Testis (tissue), 5 donors: ENCODE measurements at regions of chr6 and their contacts with region 1.

Region 1: GRCh38 chr6:43454696-43455530 is 435 bp downstream of the DLK2 start:
- DNase-seq: peak; percentile 89
- H3K4me3 ChIP-seq: peak overlapping the region; percentile 13 to 50
- H3K27ac ChIP-seq: no peak overlapping the region
- H3K4me1 ChIP-seq: no peaks in the 10 kb centered on the region
- H3K27me3 ChIP-seq: no peaks in the 10 kb centered on the region
- CTCF ChIP-seq: no peak
- POLR2A ChIP-seq: no peak

Region 2: GRCh38 chr6:43491750-43492661 is 37.1 kb after region 1 on chr6:
- intact Hi-C with region 1: no loop called
- DNase-seq: peak; percentile 88
- H3K4me3 ChIP-seq: no peak overlapping the region
- H3K27ac ChIP-seq: no peak overlapping the region
- H3K4me1 ChIP-seq: peaks cover 39% of the 10 kb centered on the region
- H3K27me3 ChIP-seq: no peaks in the 10 kb centered on the region
- CTCF ChIP-seq: no peak
- POLR2A ChIP-seq: no peak

Region 3: DNA sequence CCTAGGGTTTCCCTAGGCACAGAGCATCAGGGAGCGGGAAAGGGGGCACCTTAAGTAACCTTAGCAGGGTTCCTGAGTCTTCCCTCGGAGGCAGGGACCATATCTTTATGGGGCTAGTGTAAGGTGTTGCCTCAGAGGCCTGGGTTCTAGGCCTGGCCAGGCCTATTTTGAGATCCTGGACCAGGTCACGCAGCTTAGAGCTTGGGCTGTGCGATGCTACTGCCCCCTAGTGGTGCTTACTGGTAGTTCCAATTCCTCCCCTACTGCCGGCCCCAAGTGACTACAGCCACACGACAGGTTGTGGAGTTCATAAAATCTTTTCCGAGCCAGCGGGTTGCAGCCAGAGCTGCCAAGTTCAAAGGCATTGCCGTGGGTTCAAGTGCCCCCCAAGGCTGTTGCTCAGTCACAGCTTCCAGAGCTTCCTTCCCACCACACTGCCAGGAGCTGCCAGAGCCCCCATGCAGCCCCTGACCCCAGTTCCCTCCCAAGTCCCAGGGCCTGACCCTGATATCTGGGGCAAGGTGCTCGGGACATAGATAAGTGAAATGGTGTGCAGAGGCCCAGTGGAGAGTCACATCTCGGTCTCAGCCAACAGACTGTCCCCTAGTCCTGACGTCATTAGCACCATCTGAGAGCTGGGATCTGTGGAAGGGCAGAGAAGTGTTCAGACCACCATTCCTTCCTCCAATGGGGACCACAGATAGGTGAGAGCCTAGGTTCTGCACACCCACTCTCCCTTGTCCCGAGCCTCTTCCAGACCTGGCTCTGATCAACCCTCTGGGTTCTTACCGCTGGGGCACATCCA is 52.0 kb after region 1 on chr6:
- intact Hi-C with region 1: loop called (anchors 10 kb)
- DNase-seq: peak; percentile 87
- H3K4me3 ChIP-seq: no peak overlapping the region
- H3K27ac ChIP-seq: no peak overlapping the region
- H3K4me1 ChIP-seq: peaks cover 16% of the 10 kb centered on the region
- H3K27me3 ChIP-seq: no peaks in the 10 kb centered on the region
- CTCF ChIP-seq: peak; percentile 85 to 99 (median 88)
- POLR2A ChIP-seq: no peak

Region 4: GRCh38 chr6:43616725-43617472 is 162.0 kb after region 1 on chr6:
- intact Hi-C with region 1: no loop called
- DNase-seq: no peak
- H3K4me3 ChIP-seq: no peak overlapping the region
- H3K27ac ChIP-seq: no peak overlapping the region
- H3K4me1 ChIP-seq: no peaks in the 10 kb centered on the region
- H3K27me3 ChIP-seq: no peaks in the 10 kb centered on the region
- CTCF ChIP-seq: no peak
- POLR2A ChIP-seq: no peak